Mammary epithelial cell (primary cell): ENCODE measurements at regions of chr20 and their contacts with region 1.

Region 1: GRCh38 chr20:25150016-25150415 is 45.5 kb upstream of the ENTPD6 start:
- DNase-seq: no peak
- H3K4me3 ChIP-seq: no peak overlapping the region
- H3K27ac ChIP-seq: no peak overlapping the region
- H3K4me1 ChIP-seq: peaks cover 4% of the 10 kb centered on the region
- H3K27me3 ChIP-seq: no peaks in the 10 kb centered on the region
- CTCF ChIP-seq: no peak

Region 2: GRCh38 chr20:24873025-24873620 is 276.9 kb before region 1 on chr20:
- CTCF ChIA-PET with region 1: no interaction called
- dilution Hi-C with region 1: no loop called
- in situ Hi-C with region 1: no loop called
- intact Hi-C with region 1: no loop called
- DNase-seq: no peak
- H3K4me3 ChIP-seq: no peak overlapping the region
- H3K27ac ChIP-seq: no peak overlapping the region
- H3K4me1 ChIP-seq: no peaks in the 10 kb centered on the region
- H3K27me3 ChIP-seq: peaks cover 2% of the 10 kb centered on the region
- CTCF ChIP-seq: no peak

Region 3: DNA sequence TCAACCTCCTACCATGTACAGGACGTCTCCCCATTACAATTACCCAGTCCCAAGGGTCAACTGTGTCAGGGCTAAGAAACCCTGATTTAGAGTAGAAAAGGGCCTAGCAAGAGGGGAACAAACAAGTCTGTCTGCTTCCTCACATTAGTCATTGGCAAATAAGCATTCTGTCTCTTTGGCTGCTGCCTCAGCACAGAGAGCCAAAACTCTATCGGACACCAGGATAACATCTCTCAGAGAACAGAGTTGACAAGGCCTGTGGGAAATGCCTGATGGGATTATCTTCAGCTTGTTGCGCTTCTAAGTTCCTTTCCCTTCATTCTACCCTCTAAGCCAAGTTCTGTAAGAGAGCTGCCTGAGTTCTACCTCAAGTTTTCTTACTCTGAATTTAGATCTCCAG is 49.1 kb before region 1 on chr20:
- CTCF ChIA-PET with region 1: no interaction called
- dilution Hi-C with region 1: loop called (anchors 10 kb)
- in situ Hi-C with region 1: no loop called
- intact Hi-C with region 1: no loop called
- DNase-seq: no peak
- H3K4me3 ChIP-seq: no peak overlapping the region
- H3K27ac ChIP-seq: no peak overlapping the region
- H3K4me1 ChIP-seq: no peaks in the 10 kb centered on the region
- H3K27me3 ChIP-seq: peaks cover 2% of the 10 kb centered on the region
- CTCF ChIP-seq: no peak

Region 4: DNA sequence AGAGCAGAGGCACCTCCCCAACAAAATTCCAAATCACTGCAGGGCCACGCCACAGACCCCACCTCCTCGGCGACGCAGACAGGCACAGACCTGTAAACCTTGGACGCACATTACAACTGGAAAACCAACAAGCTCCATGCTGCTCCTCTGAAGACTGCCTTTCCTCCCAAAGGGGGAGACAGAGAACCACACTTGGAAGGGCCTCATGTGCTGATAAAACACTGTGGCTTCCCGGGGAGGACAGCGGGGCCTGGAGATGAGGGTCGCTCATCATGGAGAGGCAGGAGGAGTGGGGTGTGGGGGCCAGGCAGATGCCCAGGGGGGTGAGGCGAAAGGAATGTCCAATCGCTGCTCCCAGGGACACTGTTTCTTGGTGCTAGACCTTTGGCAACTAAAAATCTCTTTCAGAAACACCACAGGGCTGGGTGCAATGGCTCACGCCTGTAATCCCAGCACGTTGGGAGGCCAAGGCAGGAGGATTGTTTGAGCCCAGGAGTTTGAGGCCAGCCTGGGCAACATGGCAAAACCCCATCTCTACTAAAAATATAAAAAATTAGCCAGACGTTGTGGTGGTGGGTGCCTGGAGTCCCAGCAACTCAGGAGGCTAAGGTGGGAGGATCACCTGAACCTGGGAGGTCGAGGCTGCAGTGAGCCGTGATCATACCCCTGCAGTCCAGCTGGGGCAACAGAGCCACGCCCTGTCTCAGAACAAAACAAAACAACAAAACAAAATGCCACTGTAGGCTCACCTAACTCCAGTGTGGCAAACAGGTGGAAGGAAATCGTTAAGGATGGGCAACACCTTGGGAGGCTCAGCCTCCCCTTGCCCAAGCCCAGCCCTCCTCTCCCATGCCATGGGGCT is 186.8 kb after region 1 on chr20:
- CTCF ChIA-PET with region 1: no interaction called
- dilution Hi-C with region 1: no loop called
- in situ Hi-C with region 1: no loop called
- intact Hi-C with region 1: no loop called
- DNase-seq: peak; percentile 76
- H3K4me3 ChIP-seq: no peak overlapping the region
- H3K27ac ChIP-seq: no peak overlapping the region
- H3K4me1 ChIP-seq: peaks cover 3% of the 10 kb centered on the region
- H3K27me3 ChIP-seq: no peaks in the 10 kb centered on the region
- CTCF ChIP-seq: peak; percentile 67 to 89